AG04449 (cell line): ENCODE measurements at regions of chr11 and their contacts with region 1.

Region 1: DNA sequence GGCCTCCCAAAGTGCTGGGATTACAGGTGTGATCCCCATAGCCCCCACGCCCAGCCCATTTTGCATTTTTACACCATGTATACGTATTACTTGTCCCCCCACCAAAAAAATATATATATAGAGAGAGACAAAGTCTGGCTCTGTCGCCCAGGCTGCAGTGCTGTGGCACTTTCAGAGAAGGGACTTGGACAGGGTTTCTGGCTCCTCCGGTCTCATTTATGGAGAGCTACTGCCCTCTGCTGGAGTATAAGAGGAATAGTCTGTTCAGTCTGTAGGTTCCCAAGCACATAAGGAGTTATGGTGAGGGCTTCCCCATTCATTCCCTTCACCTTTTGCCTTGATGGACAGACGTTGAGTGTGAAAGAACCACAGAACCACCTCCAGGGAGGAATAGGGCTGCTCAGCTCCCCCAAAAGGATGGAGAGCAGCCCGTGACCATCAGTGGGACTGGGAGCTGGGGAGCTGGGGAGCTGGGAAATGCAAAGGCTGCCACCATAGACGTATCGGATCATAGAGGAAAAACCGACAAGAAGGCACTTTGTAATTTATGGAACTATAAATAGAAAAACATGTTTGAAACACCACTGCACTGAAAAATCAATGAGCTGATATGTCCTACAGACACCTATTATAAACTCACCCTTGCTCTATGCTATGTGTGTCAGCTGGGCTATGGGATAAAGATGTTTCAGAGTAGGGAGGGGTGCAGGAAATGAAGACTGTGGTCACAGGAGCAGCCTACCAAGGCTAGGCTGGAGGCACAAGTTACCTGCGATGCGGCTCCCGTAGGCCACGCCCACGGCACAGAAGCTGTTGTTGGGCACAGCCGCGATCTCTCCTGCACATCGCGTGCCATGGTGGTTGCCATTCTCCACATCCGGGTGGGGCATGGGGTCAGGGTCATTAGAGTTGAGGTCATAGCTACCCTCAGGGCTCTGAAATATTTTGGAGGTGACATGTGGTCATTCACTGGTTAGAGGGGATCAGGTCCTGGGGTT is 5.2 kb downstream of the PCSK7 start:
- DNase-seq: peak; percentile 45
- H3K4me3 ChIP-seq: no peak overlapping the region
- CTCF ChIP-seq: peak; percentile 66

Region 2: DNA sequence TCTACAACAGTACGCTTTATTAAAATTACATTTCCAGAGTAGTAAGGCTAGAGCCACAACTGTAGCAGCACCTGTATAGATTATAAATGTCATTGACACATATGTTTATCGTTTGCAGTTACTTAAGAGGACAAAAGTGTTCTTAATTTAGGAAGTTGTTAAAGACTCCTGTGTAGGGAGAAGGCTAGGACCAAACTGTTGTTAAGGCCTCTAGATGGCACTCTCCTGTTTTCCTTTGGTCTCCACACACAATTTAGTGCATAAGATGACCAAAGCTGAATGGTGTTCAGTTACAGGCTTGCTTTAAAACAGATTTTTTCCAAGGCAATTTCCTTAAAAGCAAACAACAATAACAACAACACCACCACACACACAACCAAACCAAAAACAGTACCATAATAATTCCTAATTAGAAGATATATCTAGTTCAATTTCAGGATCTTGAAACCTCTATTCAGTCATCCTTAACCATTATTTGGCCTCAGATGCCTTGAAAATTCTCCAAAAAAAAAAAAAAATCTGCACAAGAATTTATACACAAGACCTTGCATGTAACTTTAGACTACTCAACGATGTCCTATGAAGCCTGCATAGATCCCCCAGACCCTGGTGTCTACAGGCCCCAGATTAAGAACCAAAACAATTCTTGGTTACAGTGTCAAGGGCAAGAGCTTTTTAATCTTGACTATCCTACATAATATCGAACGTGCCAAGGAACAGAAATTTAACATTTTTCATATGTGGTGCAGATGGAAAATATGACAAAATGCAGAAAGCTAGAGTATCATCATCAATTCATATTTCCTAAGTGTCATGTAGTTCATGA is 346.7 kb before region 1 on chr11:
- CTCF ChIA-PET with region 1: interaction called, 12 read pairs
- POLR2A ChIA-PET with region 1: no interaction called
- DNase-seq: no peak
- H3K4me3 ChIP-seq: no peak overlapping the region
- CTCF ChIP-seq: peak; percentile 76

Region 3: DNA sequence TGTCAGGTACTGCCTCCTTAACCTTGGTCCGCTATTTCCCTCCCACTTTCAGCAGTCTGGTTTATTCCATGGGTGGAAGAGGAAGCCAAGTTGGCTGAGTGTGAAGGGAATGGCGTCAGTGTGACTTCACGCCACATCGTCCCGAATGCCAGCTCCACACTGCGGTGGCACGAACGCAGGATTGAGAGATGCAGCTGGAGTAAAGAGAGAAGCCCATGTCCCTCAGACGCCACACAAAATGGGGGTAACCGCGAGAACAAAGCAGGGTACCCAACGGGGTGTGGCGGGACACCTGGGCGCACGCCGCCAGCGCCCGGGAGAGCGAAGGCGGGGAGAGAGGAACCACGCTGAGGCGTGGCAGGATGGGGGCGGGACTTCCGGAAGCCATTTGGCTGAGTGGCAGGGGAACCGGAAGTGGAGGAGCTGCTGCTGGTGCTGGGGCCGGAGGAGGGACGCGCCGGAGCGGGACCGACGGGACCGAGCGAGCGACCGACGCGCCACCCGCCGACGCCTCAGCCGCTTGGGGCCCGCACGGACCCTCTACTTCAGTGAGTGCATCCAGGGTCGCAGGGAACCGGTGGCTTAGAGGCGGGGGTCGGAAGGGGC is 82.7 kb before region 1 on chr11 and contains the start of gene PAFAH1B2:
- CTCF ChIA-PET with region 1: interaction called, 16 read pairs
- POLR2A ChIA-PET with region 1: interaction called, 5 read pairs
- DNase-seq: no peak
- H3K4me3 ChIP-seq: peak within 1 kb of the TSS; percentile 89
- CTCF ChIP-seq: no peak

Region 4: GRCh38 chr11:117199061-117199915 is 27.4 kb before region 1 on chr11 and contains the start of gene TAGLN:
- CTCF ChIA-PET with region 1: interaction called, 15 read pairs
- POLR2A ChIA-PET with region 1: interaction called, 16 read pairs
- DNase-seq: peak; percentile 87
- H3K4me3 ChIP-seq: peak within 1 kb of the TSS; percentile 99
- CTCF ChIP-seq: no peak

Region 5: GRCh38 chr11:117210620-117211019 is 16.1 kb before region 1 on chr11:
- CTCF ChIA-PET with region 1: interaction called, 191 read pairs
- POLR2A ChIA-PET with region 1: interaction called, 12 read pairs
- DNase-seq: no peak
- H3K4me3 ChIP-seq: no peak overlapping the region
- CTCF ChIP-seq: no peak

Region 6: DNA sequence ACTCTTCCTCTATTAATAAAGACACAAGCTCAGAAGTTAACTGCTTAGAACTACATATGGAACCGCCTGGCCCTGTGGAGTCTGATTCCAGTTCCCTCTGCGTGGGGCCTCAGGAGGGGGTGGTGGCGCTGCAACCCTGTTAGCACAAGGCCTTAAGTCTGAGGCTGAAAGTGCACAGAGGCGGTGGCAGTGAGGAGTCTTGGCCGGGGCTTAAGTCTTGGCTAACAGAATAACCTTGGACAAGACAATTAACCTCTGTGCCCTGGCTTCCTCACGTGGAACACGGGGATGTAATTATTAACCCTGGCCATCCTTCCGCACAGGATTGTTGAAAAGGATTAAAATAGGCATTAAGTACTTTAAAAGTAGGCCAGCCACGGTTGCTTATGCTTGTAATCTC is 292.5 kb after region 1 on chr11:
- CTCF ChIA-PET with region 1: no interaction called
- POLR2A ChIA-PET with region 1: no interaction called
- DNase-seq: no peak
- H3K4me3 ChIP-seq: no peak overlapping the region
- CTCF ChIP-seq: no peak